Natural killer cell (primary cell): ENCODE measurements at regions of chr11 and their contacts with region 1.

Region 1: GRCh38 chr11:2532704-2533586 is 88.1 kb downstream of the KCNQ1 start:
- DNase-seq: peak; percentile 91 to 96
- ATAC-seq: peak; percentile 85 to 89 (median 86)
- H3K4me3 ChIP-seq: no peak overlapping the region
- H3K4me3 Mint-ChIP-seq: peak overlapping the region; percentile 91
- H3K27ac ChIP-seq: no peak overlapping the region
- H3K27ac Mint-ChIP-seq: peak overlapping the region; percentile 30 to 75
- H3K4me1 ChIP-seq: peaks cover 22% of the 10 kb centered on the region
- H3K4me1 Mint-ChIP-seq: peaks cover 12 to 15% of the 10 kb centered on the region in 2 donors
- H3K27me3 ChIP-seq: peaks cover 6% of the 10 kb centered on the region
- H3K27me3 Mint-ChIP-seq: peaks cover 12 to 15% of the 10 kb centered on the region in 2 donors
- CTCF ChIP-seq: peak; percentile 98

Region 2: DNA sequence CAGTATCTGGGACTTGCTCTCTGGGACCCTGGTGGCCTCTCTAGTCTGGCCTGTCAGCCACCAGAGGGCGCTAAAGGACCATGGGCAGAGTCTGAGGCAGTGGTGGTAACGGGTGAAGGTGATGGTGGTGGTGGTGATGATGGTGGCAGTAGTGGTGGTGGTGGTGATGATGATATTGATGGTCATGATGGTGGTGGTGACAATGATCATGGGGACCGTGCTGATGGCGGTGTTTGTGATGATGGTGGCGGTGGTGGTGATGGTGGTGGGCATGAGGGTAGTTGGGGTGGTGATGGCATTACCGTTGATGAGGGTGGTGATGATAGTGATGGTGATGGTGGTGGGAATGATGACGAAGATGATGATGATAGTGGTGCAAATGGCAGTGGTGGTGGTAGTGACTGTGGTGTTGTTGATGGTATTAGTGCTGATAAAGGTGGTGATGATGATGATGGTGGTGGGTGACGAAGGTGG is 104.6 kb before region 1 on chr11:
- intact Hi-C with region 1: loop called (anchors 1 kb)
- DNase-seq: peak; percentile 82 to 92
- ATAC-seq: peak; percentile 75 to 90 (median 87)
- H3K4me3 ChIP-seq: no peak overlapping the region
- H3K4me3 Mint-ChIP-seq: no peak overlapping the region
- H3K27ac ChIP-seq: no peak overlapping the region
- H3K27ac Mint-ChIP-seq: no peak overlapping the region
- H3K4me1 ChIP-seq: no peaks in the 10 kb centered on the region
- H3K4me1 Mint-ChIP-seq: peaks cover 0 to 5% of the 10 kb centered on the region in 2 donors
- H3K27me3 ChIP-seq: no peaks in the 10 kb centered on the region
- H3K27me3 Mint-ChIP-seq: no peaks in the 10 kb centered on the region
- CTCF ChIP-seq: peak; percentile 70

Region 3: GRCh38 chr11:2713661-2714462 is 180.9 kb after region 1 on chr11:
- intact Hi-C with region 1: no loop called
- DNase-seq: no peak
- ATAC-seq: no peak
- H3K4me3 ChIP-seq: no peak overlapping the region
- H3K4me3 Mint-ChIP-seq: no peak overlapping the region
- H3K27ac ChIP-seq: no peak overlapping the region
- H3K27ac Mint-ChIP-seq: no peak overlapping the region
- H3K4me1 ChIP-seq: no peaks in the 10 kb centered on the region
- H3K4me1 Mint-ChIP-seq: no peaks in the 10 kb centered on the region
- H3K27me3 ChIP-seq: no peaks in the 10 kb centered on the region
- H3K27me3 Mint-ChIP-seq: no peaks in the 10 kb centered on the region
- CTCF ChIP-seq: no peak

Region 4: DNA sequence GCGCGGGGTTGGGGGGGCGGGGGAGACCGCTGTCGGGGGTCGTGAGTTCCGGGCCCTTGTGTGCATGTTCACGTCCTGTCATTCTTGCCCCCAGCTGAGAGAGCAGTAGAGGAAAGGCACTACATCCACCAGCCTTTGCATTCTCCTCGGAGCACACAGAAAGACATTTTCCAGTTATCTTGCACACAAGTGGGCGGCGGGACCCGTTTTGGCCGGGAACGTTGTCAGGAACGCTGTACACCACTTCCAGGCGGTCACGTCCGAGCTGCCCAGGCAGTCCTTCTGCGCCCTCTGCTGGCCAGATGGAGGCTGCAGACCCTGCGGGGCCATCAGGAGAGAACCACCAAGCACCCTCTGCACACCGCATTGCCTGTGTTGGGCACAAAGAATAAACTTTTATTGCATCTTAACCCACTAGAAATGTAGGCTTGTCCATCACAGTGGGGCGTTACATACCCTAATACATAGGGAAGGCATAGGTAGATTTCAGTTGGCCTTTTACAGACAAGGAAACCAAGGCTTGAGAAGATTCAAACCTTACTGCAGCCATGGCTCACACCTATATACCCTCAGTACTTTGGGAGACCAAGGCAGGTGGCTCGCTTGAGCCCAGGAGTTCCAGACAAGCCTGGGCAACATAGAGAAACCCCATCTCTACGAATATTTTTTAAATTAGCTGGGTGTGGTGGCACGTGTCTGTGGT is 355.5 kb after region 1 on chr11:
- intact Hi-C with region 1: loop called (anchors 1 kb)
- DNase-seq: peak; percentile 85 to 91
- ATAC-seq: peak; percentile 32 to 45 (median 34)
- H3K4me3 ChIP-seq: no peak overlapping the region
- H3K4me3 Mint-ChIP-seq: peak overlapping the region; percentile 37
- H3K27ac ChIP-seq: no peak overlapping the region
- H3K27ac Mint-ChIP-seq: no peak overlapping the region
- H3K4me1 ChIP-seq: peaks cover 45% of the 10 kb centered on the region
- H3K4me1 Mint-ChIP-seq: peaks cover 28 to 31% of the 10 kb centered on the region in 2 donors
- H3K27me3 ChIP-seq: peaks cover 3% of the 10 kb centered on the region
- H3K27me3 Mint-ChIP-seq: peaks cover 1 to 2% of the 10 kb centered on the region in 2 donors
- CTCF ChIP-seq: peak; percentile 94

Region 5: GRCh38 chr11:2930704-2931428 is 397.9 kb after region 1 on chr11:
- intact Hi-C with region 1: loop called (anchors 2 kb)
- DNase-seq: peak in 1 of 2 donors; percentile 60
- ATAC-seq: no peak
- H3K4me3 ChIP-seq: peak overlapping the region; percentile 19
- H3K4me3 Mint-ChIP-seq: peak overlapping the region; percentile 78
- H3K27ac ChIP-seq: no peak overlapping the region
- H3K27ac Mint-ChIP-seq: peak overlapping the region; percentile 69 to 92
- H3K4me1 ChIP-seq: peaks cover 50% of the 10 kb centered on the region
- H3K4me1 Mint-ChIP-seq: peaks cover 17 to 39% of the 10 kb centered on the region in 2 donors
- H3K27me3 ChIP-seq: peaks cover 31% of the 10 kb centered on the region
- H3K27me3 Mint-ChIP-seq: peaks cover 10 to 22% of the 10 kb centered on the region in 2 donors
- CTCF ChIP-seq: peak; percentile 30

Region 6: GRCh38 chr11:3091791-3092602 is 559.1 kb after region 1 on chr11:
- intact Hi-C with region 1: loop called (anchors 2 kb)
- DNase-seq: peak; percentile 66 to 86
- ATAC-seq: peak; percentile 80 to 89 (median 80)
- H3K4me3 ChIP-seq: no peak overlapping the region
- H3K4me3 Mint-ChIP-seq: no peak overlapping the region
- H3K27ac ChIP-seq: no peak overlapping the region
- H3K27ac Mint-ChIP-seq: peak overlapping the region in 1 of 2 donors; percentile 22
- H3K4me1 ChIP-seq: peaks cover 10% of the 10 kb centered on the region
- H3K4me1 Mint-ChIP-seq: peaks cover 0 to 23% of the 10 kb centered on the region in 2 donors
- H3K27me3 ChIP-seq: no peaks in the 10 kb centered on the region
- H3K27me3 Mint-ChIP-seq: no peaks in the 10 kb centered on the region
- CTCF ChIP-seq: peak; percentile 98

Region 7: DNA sequence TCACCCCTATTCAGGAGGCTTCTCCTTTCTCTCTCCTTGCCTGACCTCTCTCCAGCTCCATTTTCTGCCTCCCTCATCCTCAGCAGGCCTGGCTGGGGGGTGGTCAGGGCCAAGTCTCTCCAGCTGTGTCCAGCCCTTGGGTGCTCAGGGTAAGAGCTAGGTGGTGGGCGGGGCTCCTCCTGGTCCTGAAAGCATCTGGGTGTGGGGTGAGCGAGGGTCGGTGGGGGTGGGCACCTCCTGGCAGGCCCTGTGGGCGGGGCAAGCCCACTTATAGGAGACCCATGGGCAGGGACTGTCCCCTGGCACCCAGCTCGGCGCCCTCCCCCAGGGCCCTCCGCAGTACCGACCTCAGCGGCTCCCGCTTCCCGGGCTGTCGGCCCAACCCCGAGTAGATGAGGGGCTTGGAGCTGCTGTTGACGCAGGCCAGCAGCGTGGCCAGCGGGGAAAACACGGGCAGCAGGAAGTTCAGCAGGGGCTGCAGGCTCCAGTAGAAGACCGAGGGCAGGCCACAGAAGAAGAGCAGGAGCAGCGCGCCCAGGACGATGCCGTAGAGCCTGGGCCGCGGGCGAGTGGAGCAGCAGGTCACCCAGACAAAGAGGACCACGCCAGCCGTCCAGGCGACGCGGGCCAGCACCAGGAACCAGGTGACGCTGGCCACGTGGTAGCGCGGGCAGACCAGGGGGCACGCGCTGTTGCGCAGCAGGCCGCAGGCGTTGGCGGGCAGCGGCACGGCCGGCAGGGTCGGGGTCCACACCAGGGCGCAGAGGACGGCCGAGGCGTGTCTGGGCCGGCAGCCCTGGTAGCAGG is 684.9 kb after region 1 on chr11:
- intact Hi-C with region 1: loop called (anchors 2 kb)
- DNase-seq: no peak
- ATAC-seq: no peak
- H3K4me3 ChIP-seq: no peak overlapping the region
- H3K4me3 Mint-ChIP-seq: no peak overlapping the region
- H3K27ac ChIP-seq: no peak overlapping the region
- H3K27ac Mint-ChIP-seq: no peak overlapping the region
- H3K4me1 ChIP-seq: peaks cover 15% of the 10 kb centered on the region
- H3K4me1 Mint-ChIP-seq: peaks cover 7 to 23% of the 10 kb centered on the region in 2 donors
- H3K27me3 ChIP-seq: peaks cover 2% of the 10 kb centered on the region
- H3K27me3 Mint-ChIP-seq: peaks cover 13 to 27% of the 10 kb centered on the region in 2 donors
- CTCF ChIP-seq: no peak

Region 8: GRCh38 chr11:3412837-3413236 is 879.9 kb after region 1 on chr11:
- intact Hi-C with region 1: loop called (anchors 2 kb)
- DNase-seq: no peak
- ATAC-seq: no peak
- H3K4me3 ChIP-seq: no peak overlapping the region
- H3K4me3 Mint-ChIP-seq: no peak overlapping the region
- H3K27ac ChIP-seq: no peak overlapping the region
- H3K27ac Mint-ChIP-seq: no peak overlapping the region
- H3K4me1 ChIP-seq: no peaks in the 10 kb centered on the region
- H3K4me1 Mint-ChIP-seq: peaks cover 0 to 10% of the 10 kb centered on the region in 2 donors
- H3K27me3 ChIP-seq: no peaks in the 10 kb centered on the region
- H3K27me3 Mint-ChIP-seq: peaks cover 0 to 3% of the 10 kb centered on the region in 2 donors
- CTCF ChIP-seq: no peak